ENCODE measurements at regions of chr4 and their contacts with region 1.

Region 1: GRCh38 chr4:118905566-118905965 is 16.9 kb downstream of the SYNPO2 start:
- DNase-seq: no peak
- H3K4me3 ChIP-seq: no peak overlapping the region
- H3K27ac ChIP-seq: peak overlapping the region; percentile 35 to 70 (median 59)
- H3K4me1 ChIP-seq: peaks cover 4 to 17% (median 7%) of the 10 kb centered on the region in 4 donors
- H3K27me3 ChIP-seq: no peaks in the 10 kb centered on the region
- CTCF ChIP-seq: no peak
- EP300 ChIP-seq: no peak
- POLR2A ChIP-seq: no peak

Region 2: GRCh38 chr4:119010909-119011606 is 105.5 kb after region 1 on chr4:
- in situ Hi-C with region 1: no loop called
- intact Hi-C with region 1: no loop called
- DNase-seq: no peak
- H3K4me3 ChIP-seq: no peak overlapping the region
- H3K27ac ChIP-seq: peak overlapping the region; percentile 42 to 83 (median 66)
- H3K4me1 ChIP-seq: peaks cover 0 to 15% (median 0%) of the 10 kb centered on the region in 4 donors
- H3K27me3 ChIP-seq: no peaks in the 10 kb centered on the region
- CTCF ChIP-seq: no peak
- EP300 ChIP-seq: no peak
- POLR2A ChIP-seq: no peak

Region 3: GRCh38 chr4:119138046-119138445 is 232.5 kb after region 1 on chr4:
- in situ Hi-C with region 1: no loop called
- intact Hi-C with region 1: no loop called
- DNase-seq: no peak
- H3K4me3 ChIP-seq: no peak overlapping the region
- H3K27ac ChIP-seq: no peak overlapping the region
- H3K4me1 ChIP-seq: peaks cover 0 to 14% (median 5%) of the 10 kb centered on the region in 4 donors
- H3K27me3 ChIP-seq: no peaks in the 10 kb centered on the region
- CTCF ChIP-seq: no peak
- EP300 ChIP-seq: no peak
- POLR2A ChIP-seq: no peak

Region 4: DNA sequence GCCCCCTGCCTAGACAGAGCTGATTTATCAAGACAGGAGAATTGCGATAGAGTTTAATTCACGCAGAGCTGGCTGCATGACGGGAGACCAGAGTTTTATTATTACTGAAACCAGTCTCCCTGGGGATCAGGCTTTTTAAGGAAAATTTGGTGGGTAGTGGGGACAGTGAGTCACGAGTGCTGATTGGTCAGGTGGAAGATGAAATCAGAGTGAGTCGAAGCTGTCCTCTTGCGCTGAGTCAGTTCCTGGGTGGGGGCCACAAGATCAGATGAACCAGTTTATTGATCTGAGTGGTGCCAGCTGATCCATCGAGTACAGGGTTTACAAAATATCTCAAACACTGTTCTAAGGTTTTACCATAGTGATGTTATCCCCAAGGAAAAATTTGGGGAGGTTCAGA is 266.7 kb after region 1 on chr4:
- in situ Hi-C with region 1: no loop called
- intact Hi-C with region 1: no loop called
- DNase-seq: no peak
- H3K4me3 ChIP-seq: no peak overlapping the region
- H3K27ac ChIP-seq: no peak overlapping the region
- H3K4me1 ChIP-seq: no peaks in the 10 kb centered on the region
- H3K27me3 ChIP-seq: no peaks in the 10 kb centered on the region
- CTCF ChIP-seq: no peak
- EP300 ChIP-seq: no peak
- POLR2A ChIP-seq: no peak

Region 5: GRCh38 chr4:119212234-119212963 is 306.8 kb after region 1 on chr4 and contains the start of gene USP53:
- in situ Hi-C with region 1: no loop called
- intact Hi-C with region 1: loop called (anchors 2 kb)
- DNase-seq: peak; percentile 99
- H3K4me3 ChIP-seq: peak within 1 kb of the TSS; percentile 57 to 81 (median 72)
- H3K27ac ChIP-seq: peak within 1 kb of the TSS; percentile 95 to 97 (median 96)
- H3K4me1 ChIP-seq: peaks cover 0 to 41% (median 14%) of the 10 kb centered on the region in 4 donors
- H3K27me3 ChIP-seq: no peaks in the 10 kb centered on the region
- CTCF ChIP-seq: peak in 1 of 5 experiments; percentile 27
- EP300 ChIP-seq: no peak
- POLR2A ChIP-seq: peak; percentile 99
- total RNA-seq, gene USP53: 71.4 to 165 (median 98.5) TPM

Measured in transverse colon (tissue), 4 donors.